Activated CD4-positive, alpha-beta T cell treated with anti-CD3 and anti-CD28 coated beads, Interleukin-2, amount 10 ng/mL, durations not matched to agents 7 days and 5 days (primary cell): ENCODE measurements at regions of chr2 and their contacts with region 1.

Region 1: DNA sequence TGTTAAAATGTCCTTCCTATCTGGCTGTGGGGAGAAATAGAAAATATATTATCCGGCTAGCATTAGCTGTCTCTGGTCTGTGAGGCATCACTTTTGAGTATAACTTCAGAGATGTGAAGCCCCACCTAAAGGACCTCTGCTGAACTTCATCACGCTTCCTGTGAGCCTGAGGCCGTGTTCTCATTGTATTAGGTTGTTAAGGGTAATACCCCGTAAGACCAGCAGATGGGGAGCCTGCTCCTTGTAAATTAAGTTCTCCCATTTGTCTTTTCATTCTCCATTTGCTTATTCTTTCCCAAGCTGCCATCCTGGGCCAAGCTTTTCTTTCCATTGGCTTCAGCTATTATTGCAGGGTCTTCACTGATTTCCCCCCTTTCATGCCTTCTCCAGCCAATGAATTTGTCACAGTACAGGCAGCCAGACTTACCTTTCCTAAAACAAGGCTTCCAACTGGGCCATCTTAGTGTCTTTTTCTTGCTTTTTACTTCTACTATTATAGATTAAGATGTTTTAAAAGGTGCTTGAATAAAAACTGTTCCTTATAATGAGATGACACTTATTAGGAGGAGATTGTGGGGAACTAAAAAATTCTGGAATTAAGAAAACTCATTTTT is 12.4 kb downstream of the NIF3L1 start:
- DNase-seq: peak; percentile 87
- H3K4me3 Mint-ChIP-seq: no peak overlapping the region
- H3K27ac Mint-ChIP-seq: peak overlapping the region; percentile 65
- H3K4me1 Mint-ChIP-seq: peaks cover 12% of the 10 kb centered on the region
- H3K27me3 Mint-ChIP-seq: no peaks in the 10 kb centered on the region

Region 2: GRCh38 chr2:200383383-200384110 is 518.0 kb before region 1 on chr2:
- CTCF ChIA-PET with region 1: no interaction called
- POLR2A ChIA-PET with region 1: no interaction called
- DNase-seq: no peak
- H3K4me3 Mint-ChIP-seq: peak overlapping the region; percentile 54
- H3K27ac Mint-ChIP-seq: peak overlapping the region; percentile 97
- H3K4me1 Mint-ChIP-seq: peaks cover 58% of the 10 kb centered on the region
- H3K27me3 Mint-ChIP-seq: no peaks in the 10 kb centered on the region

Region 3: DNA sequence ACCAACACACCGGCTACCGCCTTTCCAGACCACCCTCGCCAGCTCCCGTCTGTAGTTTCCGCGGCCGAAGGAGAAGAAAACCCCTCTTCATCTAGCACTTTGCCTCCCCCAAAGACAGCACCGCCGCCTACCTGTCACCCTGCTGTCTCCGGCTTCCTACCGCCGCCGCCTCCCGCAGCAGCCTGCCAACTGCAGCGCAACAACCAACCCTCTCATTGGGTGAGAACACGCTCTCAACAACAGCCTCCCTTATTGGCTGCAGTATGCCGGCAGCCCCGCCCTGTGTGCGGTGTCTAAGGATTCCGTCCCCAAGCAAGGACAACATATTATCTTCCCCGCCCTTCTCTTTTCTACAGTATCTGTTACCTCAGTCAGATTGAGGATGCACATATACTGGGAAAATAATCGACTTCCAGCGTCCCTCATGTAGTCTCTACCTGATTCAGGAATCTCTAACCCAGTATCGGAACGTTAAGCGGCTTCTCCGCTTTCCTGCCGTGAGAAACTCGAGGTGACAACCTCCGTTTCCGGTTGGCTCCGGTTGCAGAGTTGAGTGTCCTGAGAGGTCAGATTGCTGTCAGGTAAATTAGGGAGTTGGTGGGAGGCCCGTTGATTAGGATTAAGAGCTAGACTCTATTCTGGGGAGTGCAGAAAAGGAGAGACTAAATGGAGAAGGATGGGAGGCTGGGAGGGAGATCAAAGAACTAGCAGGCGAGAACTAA is 170.1 kb after region 1 on chr2 and contains the starts of genes HYCC2 and NDUFB3:
- CTCF ChIA-PET with region 1: interaction called, 17 read pairs
- POLR2A ChIA-PET with region 1: no interaction called
- DNase-seq: peak; percentile 94
- H3K4me3 Mint-ChIP-seq: peak within 1 kb of the TSS; percentile 86
- H3K27ac Mint-ChIP-seq: peak within 1 kb of the TSS; percentile 96
- H3K4me1 Mint-ChIP-seq: peaks cover 52% of the 10 kb centered on the region
- H3K27me3 Mint-ChIP-seq: no peaks in the 10 kb centered on the region
- total RNA-seq, gene HYCC2: 31.4 to 32.0 TPM
- total RNA-seq, gene NDUFB3: 134 to 147 TPM

Region 4: DNA sequence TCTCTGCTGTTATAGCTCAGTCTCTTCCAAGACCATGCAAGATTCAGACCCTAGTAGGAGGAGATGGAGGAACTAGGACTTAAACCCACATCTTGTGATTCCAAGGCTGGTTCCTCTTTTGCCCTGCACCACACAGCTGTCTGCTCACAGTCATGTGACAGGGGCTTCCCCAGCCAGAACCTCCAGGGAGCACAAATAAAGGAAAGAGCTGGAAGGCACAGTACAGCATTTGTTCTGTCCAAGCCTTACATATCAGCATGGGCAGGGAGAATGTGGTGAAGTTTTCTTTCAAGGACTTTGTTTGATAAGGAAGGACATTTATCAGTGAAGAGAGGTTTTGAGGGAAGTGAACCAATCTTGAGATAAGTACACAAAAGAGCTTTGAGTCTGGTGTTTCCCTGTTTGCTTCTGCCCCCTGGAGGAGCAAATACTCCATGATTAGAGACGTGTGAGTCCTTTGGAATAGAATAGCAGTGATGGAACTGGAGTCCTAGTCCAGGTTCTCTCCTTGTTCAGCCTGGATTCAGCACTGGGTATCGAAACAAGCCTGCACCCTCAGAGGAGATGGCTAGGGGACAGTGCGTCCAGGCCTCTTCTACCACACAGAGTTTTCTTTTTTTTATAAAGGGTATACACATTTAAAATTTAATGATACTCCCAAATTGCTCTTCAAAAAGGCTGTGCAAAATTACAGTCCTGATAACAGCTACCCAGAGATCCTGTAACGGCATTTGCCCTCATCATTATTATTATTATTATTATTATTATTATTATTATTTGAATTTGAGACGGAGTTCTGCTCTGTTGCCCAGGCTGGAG is 256.8 kb after region 1 on chr2:
- CTCF ChIA-PET with region 1: interaction called, 11 read pairs
- POLR2A ChIA-PET with region 1: no interaction called
- DNase-seq: peak; percentile 81
- H3K4me3 Mint-ChIP-seq: no peak overlapping the region
- H3K27ac Mint-ChIP-seq: peak overlapping the region; percentile 75
- H3K4me1 Mint-ChIP-seq: peaks cover 12% of the 10 kb centered on the region
- H3K27me3 Mint-ChIP-seq: no peaks in the 10 kb centered on the region

Region 5: DNA sequence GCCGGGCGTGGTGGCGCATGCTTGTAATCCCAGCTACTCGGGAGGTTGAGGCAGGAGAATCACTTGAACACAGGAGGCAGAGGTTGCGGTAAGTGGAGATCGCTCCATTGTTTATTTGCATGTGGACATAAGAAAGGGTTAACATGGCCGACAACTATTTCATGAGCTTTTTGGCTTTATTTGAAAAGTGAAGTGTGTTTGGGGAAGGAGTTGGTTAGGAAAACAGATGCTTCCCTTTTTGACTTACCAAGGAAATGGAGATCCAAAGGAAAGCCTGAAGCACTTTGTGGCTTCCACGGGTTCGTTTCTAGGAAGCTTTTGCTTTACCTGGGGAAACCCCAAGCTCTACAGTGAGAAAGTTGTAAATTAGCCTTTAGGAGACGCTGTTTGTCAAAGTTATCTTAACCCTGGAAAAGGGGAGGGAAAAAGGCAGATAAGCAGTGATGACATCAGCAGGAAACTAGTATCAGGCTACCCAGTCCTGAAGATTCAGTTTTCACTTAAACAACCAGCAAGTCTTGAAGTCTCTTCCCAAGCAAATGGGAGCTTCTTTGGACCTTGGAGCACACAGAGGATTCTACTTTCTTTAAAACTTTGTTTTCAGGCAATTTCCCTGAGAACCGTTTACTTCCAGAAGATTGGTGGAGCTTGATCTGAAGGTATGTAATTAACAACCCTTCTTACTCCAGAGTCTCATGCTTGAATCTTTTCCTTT is 281.2 kb after region 1 on chr2 and contains the start of gene CASP10:
- CTCF ChIA-PET with region 1: interaction called, 15 read pairs
- POLR2A ChIA-PET with region 1: no interaction called
- DNase-seq: peak; percentile 50
- H3K4me3 Mint-ChIP-seq: peak within 1 kb of the TSS; percentile 90
- H3K27ac Mint-ChIP-seq: peak within 1 kb of the TSS; percentile 89
- H3K4me1 Mint-ChIP-seq: peaks cover 40% of the 10 kb centered on the region
- H3K27me3 Mint-ChIP-seq: no peaks in the 10 kb centered on the region
- total RNA-seq, gene CASP10: 45.0 to 49.6 TPM